ENCODE measurements at regions of chr2 and their contacts with region 1.

Region 1: GRCh38 chr2:100213595-100213994 is 71.2 kb upstream of the AFF3 start:
- DNase-seq: peak in 1 of 2 donors; percentile 58
- ATAC-seq: peak; percentile 47
- H3K4me3 ChIP-seq: no peak overlapping the region
- H3K27ac ChIP-seq: peak overlapping the region in 1 of 2 donors; percentile 87
- H3K4me1 ChIP-seq: peaks cover 0 to 4% of the 10 kb centered on the region in 2 donors
- H3K27me3 ChIP-seq: no peaks in the 10 kb centered on the region

Region 2: GRCh38 chr2:99682275-99683060 is 531.1 kb before region 1 on chr2:
- intact Hi-C with region 1: no loop called
- DNase-seq: no peak
- ATAC-seq: no peak
- H3K4me3 ChIP-seq: no peak overlapping the region
- H3K27ac ChIP-seq: no peak overlapping the region
- H3K4me1 ChIP-seq: peaks cover 2% of the 10 kb centered on the region in 2 donors
- H3K27me3 ChIP-seq: no peaks in the 10 kb centered on the region

Region 3: GRCh38 chr2:100197631-100198153 is 15.9 kb before region 1 on chr2:
- intact Hi-C with region 1: loop called in 1 of 2 experiments (anchors 2 kb)
- DNase-seq: peak; percentile 86 to 91
- ATAC-seq: peak; percentile 89
- H3K4me3 ChIP-seq: no peak overlapping the region
- H3K27ac ChIP-seq: peak overlapping the region; percentile 91 to 95
- H3K4me1 ChIP-seq: no peaks in the 10 kb centered on the region
- H3K27me3 ChIP-seq: no peaks in the 10 kb centered on the region

Region 4: DNA sequence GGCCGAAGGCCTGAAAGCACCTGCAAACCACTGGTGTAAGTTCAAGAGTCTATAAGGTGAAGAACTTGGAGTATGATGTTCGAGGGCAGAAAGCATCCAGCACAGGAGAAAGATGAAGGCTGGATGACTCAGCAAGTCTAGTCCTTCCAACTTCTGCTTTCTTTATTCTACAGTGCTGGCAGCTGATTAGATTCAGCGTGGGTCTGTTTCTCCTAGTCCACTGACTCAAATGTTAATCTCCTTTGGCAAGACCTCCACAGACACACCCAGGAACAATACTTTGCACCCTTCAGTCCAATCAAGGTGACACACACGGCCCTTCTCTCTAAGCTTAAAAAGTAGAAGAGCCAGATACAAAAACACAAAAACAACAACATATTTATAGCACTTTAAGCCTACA is 300.1 kb after region 1 on chr2:
- intact Hi-C with region 1: no loop called
- DNase-seq: no peak
- ATAC-seq: no peak
- H3K4me3 ChIP-seq: no peak overlapping the region
- H3K27ac ChIP-seq: no peak overlapping the region
- H3K4me1 ChIP-seq: no peaks in the 10 kb centered on the region
- H3K27me3 ChIP-seq: no peaks in the 10 kb centered on the region

Measured in aorta (tissue), 5 donors.